ENCODE measurements at regions of chr12 and their contacts with region 1.

Region 1: GRCh38 chr12:110613771-110614684 is at the start of gene TCTN1:
- DNase-seq: peak; percentile 97
- ATAC-seq: peak; percentile 100
- H3K4me3 Mint-ChIP-seq: peak within 1 kb of the TSS; percentile 85
- H3K27ac Mint-ChIP-seq: peak within 1 kb of the TSS; percentile 89
- H3K4me1 Mint-ChIP-seq: peaks cover 8% of the 10 kb centered on the region
- H3K27me3 Mint-ChIP-seq: peaks cover 2% of the 10 kb centered on the region
- total RNA-seq, gene TCTN1: 10.1 to 10.3 TPM

Region 2: GRCh38 chr12:110531741-110532333 is 82.2 kb before region 1 on chr12:
- POLR2A ChIA-PET with region 1: no interaction called
- DNase-seq: no peak
- ATAC-seq: peak; percentile 46
- H3K4me3 Mint-ChIP-seq: no peak overlapping the region
- H3K27ac Mint-ChIP-seq: peak overlapping the region; percentile 46
- H3K4me1 Mint-ChIP-seq: peaks cover 8% of the 10 kb centered on the region
- H3K27me3 Mint-ChIP-seq: no peaks in the 10 kb centered on the region

Region 3: DNA sequence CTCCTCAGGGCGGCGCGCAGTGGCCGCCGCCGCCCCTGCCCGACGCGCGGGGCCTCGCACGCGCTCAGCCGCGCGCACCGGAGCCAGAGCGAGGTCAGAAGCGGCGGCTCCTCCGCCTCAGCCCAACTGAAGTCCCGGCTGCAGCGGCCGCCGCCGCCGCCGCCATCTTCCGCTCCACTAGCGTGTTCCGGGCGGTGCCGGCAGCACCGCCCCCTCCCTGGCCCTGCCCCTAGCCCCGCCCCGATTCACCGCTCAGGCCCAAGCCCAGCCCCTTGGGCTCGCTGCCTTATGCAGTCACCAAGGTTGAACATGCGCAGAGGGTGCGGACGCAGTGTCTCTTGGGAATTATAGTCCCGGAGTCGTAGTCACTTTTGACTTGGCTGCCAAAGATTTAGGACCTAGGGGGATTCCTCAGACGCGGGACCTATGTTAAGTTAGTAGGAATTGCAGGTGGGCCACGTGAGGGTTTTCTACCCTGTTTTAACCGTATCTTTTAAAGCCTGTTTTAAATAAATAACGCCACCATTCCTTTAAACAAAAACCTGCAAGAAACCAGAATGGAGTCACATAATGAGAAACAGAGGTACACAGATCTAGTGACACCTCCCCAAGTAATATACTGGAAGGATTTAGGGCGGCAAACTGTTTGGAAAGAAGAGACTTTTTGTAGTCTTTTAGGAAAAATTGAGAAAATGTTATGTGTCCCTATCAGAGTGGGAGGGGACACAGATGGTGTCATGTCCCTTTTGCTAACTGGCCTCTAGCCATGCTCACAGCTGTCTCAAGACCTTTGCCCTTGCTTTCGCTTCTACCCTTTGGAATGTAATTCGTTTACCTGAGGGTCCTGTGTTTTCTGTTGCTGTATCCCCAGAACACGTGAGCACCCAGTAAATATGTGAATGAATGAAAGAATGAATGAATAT is 30.6 kb before region 1 on chr12 and contains the start of gene PPTC7:
- POLR2A ChIA-PET with region 1: no interaction called
- DNase-seq: peak; percentile 91
- ATAC-seq: peak; percentile 95
- H3K4me3 Mint-ChIP-seq: peak within 1 kb of the TSS; percentile 94
- H3K27ac Mint-ChIP-seq: peak within 1 kb of the TSS; percentile 91
- H3K4me1 Mint-ChIP-seq: peaks cover 52% of the 10 kb centered on the region
- H3K27me3 Mint-ChIP-seq: no peaks in the 10 kb centered on the region
- total RNA-seq, gene PPTC7: 28.3 to 30.0 TPM

Region 4: GRCh38 chr12:110600254-110600653 is 13.8 kb before region 1 on chr12:
- POLR2A ChIA-PET with region 1: interaction called, 20 read pairs
- DNase-seq: no peak
- ATAC-seq: peak; percentile 46
- H3K4me3 Mint-ChIP-seq: no peak overlapping the region
- H3K27ac Mint-ChIP-seq: no peak overlapping the region
- H3K4me1 Mint-ChIP-seq: peaks cover 10% of the 10 kb centered on the region
- H3K27me3 Mint-ChIP-seq: no peaks in the 10 kb centered on the region